ENCODE measurements at regions of chr18 and their contacts with region 1.

Region 1: GRCh38 chr18:54119524-54120019 is 104.9 kb downstream of the MBD2 start:
- DNase-seq: no peak

Region 2: DNA sequence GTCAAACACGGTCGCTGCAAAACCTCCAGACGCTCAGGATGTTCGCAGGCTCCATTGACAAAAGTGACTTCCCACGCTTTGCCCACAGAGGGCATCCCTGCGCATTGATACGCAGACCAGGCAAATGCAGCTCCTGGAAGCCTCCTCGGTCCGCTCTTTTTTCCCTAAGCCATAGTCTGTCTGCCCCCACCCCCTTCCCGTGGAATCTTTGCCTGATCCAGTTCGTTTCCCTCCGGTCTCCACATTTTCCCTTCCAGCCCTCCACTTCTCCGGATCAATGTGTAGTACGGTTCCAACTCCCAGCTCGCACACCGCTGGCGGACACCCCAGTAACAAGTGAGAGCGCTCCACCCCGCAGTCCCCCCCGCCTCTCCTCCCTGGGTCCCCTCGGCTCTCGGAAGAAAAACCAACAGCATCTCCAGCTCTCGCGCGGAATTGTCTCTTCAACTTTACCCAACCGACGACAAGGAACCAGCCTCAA is 1779.6 kb before region 1 on chr18 and contains the start of gene DCC:
- intact Hi-C with region 1: loop called (anchors 10 kb)
- DNase-seq: peak; percentile 53 to 95 (median 74)

Region 3: GRCh38 chr18:53567929-53568574 is 551.5 kb before region 1 on chr18:
- intact Hi-C with region 1: loop called (anchors 5 kb)
- DNase-seq: no peak

Region 4: DNA sequence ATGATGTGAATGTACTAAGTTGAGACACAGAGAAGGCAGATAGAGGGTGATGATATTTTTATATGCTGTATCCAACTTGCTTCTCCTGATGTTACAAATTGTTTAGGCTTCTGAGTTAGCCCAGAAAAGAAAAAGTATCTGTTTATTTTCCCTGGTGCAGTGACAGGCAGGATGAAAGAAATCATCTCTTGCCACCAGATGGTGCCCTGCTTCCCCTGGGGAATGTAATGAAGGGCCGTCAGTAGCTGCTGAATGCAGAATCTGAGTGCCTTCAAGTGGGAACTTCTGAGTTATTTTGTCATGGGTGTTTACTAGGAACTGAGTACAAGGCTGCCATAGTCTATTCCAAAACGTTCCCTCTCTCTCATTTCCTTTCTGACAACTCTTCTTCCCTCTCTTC is 420.7 kb before region 1 on chr18:
- intact Hi-C with region 1: loop called (anchors 2 kb)
- DNase-seq: peak in 8 of 10 donors; percentile 30 to 86 (median 52)

Measured in posterior cingulate gyrus (tissue), 11 donors.